Panc1 (cell line): ENCODE measurements at regions of chr15 and their contacts with region 1.

Region 1: GRCh38 chr15:76667943-76668715 is 237.0 kb downstream of the SCAPER start:
- DNase-seq: no peak
- ATAC-seq: no peak
- H3K4me3 ChIP-seq: no peak overlapping the region
- H3K27ac ChIP-seq: no peak overlapping the region
- H3K4me1 ChIP-seq: no peaks in the 10 kb centered on the region
- H3K27me3 ChIP-seq: no peaks in the 10 kb centered on the region
- CTCF ChIP-seq: no peak

Region 2: DNA sequence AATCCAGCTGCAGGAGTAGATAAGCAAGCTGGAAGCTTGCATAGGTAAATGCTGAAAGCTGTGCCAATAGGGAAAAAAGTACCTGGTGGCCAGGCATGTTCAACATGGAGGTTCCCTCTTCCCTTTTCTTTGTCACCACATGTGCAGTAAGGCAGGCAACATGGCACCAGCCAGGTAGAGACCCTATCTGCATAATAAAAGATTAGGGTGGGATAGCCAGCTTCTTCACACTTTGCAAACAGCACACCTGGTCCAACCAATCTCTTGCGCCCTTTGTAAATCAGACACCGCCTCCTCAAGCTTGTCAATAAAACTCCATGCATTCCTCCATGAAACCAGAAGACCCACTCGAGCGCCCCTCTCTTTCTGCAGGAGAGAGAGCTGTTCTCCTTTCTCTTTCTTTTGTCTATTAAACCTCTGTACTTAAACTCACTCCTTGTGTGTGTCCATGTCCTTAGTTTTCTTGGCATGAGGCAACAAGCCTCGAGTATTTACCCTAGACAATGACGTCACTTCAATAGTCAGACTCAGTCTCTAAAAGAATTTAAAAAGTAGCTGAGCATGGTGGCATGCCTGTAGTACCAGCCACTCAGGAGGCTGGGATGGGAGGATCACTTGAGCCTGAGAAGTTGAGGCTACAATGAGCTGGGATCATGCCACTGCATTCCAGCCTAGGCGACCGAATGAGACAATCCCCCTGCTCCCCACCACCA is 19.2 kb before region 1 on chr15:
- CTCF ChIA-PET with region 1: no interaction called
- POLR2A ChIA-PET with region 1: no interaction called
- in situ Hi-C with region 1: no loop called
- intact Hi-C with region 1: no loop called
- DNase-seq: no peak
- ATAC-seq: no peak
- H3K4me3 ChIP-seq: no peak overlapping the region
- H3K27ac ChIP-seq: no peak overlapping the region
- H3K4me1 ChIP-seq: no peaks in the 10 kb centered on the region
- H3K27me3 ChIP-seq: no peaks in the 10 kb centered on the region
- CTCF ChIP-seq: no peak

Region 3: GRCh38 chr15:76730262-76730661 is 62.1 kb after region 1 on chr15:
- CTCF ChIA-PET with region 1: no interaction called
- POLR2A ChIA-PET with region 1: interaction called, 16 read pairs
- in situ Hi-C with region 1: no loop called
- intact Hi-C with region 1: no loop called
- DNase-seq: no peak
- ATAC-seq: no peak
- H3K4me3 ChIP-seq: no peak overlapping the region
- H3K27ac ChIP-seq: no peak overlapping the region
- H3K4me1 ChIP-seq: no peaks in the 10 kb centered on the region
- H3K27me3 ChIP-seq: no peaks in the 10 kb centered on the region
- CTCF ChIP-seq: no peak

Region 4: DNA sequence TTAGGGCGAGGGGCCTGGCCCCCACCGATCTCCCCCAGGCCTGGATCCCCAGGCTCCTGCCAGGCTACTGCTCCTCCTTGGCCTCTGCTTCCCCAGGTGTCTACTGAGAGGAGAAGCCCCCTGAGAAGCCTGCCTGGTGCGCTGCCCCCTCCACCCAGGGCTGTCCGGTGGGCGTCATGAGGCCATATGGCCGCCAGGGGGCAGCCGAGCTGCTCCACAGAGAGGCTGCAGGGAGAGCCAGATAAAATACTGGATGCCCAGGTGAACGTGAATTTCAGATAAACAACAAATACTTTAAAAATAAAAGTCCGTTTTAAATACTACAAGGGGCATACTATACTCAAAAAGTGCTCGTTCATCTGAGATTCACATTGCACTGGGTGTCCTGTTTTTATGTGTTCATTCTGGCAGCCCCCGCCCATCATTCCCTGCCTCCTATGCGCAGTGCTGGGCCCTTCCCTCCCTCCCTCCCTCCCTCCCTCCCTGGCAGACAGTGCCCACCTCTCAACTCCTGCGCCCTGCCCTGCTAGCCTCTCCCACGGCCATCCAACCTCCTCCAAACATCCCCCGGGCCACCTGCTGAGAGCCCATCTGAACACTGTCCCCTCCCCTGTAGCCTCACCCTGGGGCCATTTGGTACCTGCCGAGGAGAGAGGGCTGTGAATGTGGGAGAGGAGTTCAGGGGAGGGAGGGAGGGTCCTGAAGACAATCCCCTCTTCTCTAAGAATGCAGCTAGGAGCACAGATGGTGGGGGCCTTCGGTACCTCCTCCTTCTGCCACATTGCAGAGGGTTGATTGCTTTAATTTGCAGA is 356.3 kb after region 1 on chr15:
- CTCF ChIA-PET with region 1: no interaction called
- POLR2A ChIA-PET with region 1: no interaction called
- in situ Hi-C with region 1: no loop called
- intact Hi-C with region 1: no loop called
- DNase-seq: peak; percentile 28
- ATAC-seq: peak; percentile 82
- H3K4me3 ChIP-seq: no peak overlapping the region
- H3K27ac ChIP-seq: no peak overlapping the region
- H3K4me1 ChIP-seq: no peaks in the 10 kb centered on the region; the same call in 1 of the 2 replicates
- H3K27me3 ChIP-seq: no peaks in the 10 kb centered on the region
- CTCF ChIP-seq: peak; percentile 98